Activated CD4-positive, alpha-beta T cell treated with anti-CD3 and anti-CD28 coated beads for 36 hours (primary cell): ENCODE measurements at regions of chr17 and their contacts with region 1.

Region 1: DNA sequence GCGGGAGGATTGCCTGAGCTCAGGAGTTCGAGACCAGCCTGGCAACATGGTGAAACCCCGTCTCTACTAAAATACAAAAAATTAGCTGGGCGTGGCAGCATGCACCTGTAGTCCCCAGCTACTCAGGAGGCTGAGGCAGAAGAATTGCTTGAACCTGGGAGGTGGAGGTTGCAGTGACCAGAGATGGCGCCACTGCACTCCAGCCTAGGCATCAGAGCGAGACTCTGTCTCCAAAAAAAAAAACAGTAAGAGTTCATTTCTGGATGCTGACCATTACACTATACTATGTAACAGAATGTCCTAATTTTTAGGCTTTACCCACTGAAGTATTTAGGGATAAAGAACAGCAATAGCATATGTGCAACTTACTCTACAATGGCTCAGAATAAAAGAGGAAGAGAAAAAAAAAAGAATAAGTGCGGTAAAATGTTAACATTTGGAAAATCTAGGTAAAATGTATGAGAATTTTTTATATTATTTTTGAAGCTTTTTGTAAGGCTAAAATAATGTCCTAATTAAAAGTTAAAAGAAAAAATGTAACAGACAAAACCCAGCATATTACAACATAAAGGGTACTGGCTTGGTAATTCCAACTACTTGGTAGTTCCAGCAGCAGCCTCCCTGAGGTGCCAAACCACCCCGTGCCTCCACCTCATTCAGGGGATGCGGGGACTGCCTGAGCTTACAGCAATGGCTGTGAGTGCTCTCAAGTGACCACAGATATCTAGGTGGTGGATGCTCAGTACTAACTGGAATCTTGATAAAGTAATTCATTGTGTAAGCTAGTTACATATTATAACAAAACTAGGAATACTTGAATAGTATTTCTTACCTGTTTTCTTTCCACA is 10.9 kb downstream of the COPS3 start:
- DNase-seq: peak; percentile 62
- ATAC-seq: no peak
- H3K4me3 Mint-ChIP-seq: no peak overlapping the region
- H3K27ac Mint-ChIP-seq: no peak overlapping the region
- H3K4me1 Mint-ChIP-seq: no peaks in the 10 kb centered on the region
- H3K27me3 Mint-ChIP-seq: no peaks in the 10 kb centered on the region

Region 2: DNA sequence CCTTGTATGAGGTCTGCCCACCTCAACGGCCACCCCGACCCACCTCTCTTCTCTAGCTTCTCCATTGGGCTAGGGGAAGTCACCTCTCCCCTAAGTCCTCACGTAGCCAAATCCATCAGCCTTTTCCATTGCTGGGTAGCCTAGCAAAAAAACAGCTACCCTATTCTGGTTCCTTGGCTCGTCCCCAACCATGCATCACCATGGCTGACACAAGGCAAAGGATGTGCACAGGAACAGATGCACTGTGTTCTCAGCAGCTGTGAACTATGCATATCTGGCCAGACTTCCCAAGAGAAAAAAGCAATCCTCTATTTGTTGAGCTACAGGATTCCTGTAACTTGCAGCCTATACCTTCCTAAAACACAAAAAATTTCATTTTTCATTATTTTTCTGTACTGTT is 11.2 kb before region 1 on chr17:
- CTCF ChIA-PET with region 1: interaction called, 8 read pairs
- POLR2A ChIA-PET with region 1: interaction called, 20 read pairs
- intact Hi-C with region 1: no loop called
- DNase-seq: no peak
- ATAC-seq: no peak
- H3K4me3 Mint-ChIP-seq: no peak overlapping the region
- H3K27ac Mint-ChIP-seq: no peak overlapping the region
- H3K4me1 Mint-ChIP-seq: peaks cover 3% of the 10 kb centered on the region
- H3K27me3 Mint-ChIP-seq: no peaks in the 10 kb centered on the region

Region 3: DNA sequence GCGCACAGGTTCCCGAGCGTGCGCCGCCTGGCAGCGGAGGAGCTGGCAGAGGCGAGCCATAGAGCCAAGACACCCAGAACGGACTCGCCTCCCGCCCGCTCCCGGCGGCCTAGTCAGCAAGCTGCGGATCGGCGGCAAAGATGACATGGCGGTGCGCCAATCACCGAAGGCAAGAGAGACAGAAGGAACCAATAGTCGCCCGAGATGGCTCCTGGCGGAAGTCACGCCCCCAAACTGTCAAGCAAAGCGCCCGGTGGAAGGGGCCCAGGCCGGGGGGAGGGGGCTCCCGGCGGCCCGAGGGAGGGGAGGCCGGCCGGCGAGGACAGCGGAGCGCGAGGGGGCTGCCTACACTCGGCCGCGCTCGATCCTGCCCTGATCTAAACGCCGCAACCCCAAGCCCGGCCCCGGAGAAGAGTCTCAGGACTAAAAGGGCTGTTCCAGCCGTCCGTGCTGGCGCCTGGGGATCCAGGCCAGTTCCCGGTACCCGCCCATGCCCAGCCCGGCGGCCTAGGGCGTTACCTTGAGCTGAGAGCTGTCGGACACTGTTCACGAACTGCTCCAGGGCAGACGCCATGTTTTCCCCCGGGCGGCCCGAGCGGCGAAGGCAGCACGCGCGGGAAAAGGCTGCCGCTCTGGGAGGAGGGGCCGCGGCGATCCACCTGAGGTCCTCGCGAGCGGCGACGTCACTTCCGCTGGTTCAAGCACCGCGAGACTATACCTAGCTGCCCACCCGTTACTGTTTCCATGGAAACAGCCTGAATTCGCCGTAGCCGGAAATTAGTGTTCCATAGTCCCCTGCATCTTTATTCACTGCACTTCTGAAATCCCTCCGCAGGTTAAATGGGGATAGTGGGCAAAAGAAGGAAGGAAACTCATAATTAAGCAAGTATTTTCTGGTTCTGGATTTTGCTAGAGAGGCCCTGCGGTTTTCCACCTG is 10.7 kb after region 1 on chr17 and contains the start of gene COPS3:
- CTCF ChIA-PET with region 1: interaction called, 21 read pairs
- POLR2A ChIA-PET with region 1: interaction called, 3 read pairs
- intact Hi-C with region 1: no loop called
- DNase-seq: peak; percentile 99
- ATAC-seq: peak; percentile 94
- H3K4me3 Mint-ChIP-seq: peak within 1 kb of the TSS; percentile 92
- H3K27ac Mint-ChIP-seq: peak within 1 kb of the TSS; percentile 95
- H3K4me1 Mint-ChIP-seq: peaks cover 41% of the 10 kb centered on the region
- H3K27me3 Mint-ChIP-seq: no peaks in the 10 kb centered on the region
- total RNA-seq, gene COPS3: 79.6 to 83.1 TPM

Region 4: GRCh38 chr17:17297217-17297616 is 27.1 kb after region 1 on chr17:
- CTCF ChIA-PET with region 1: interaction called, 4 read pairs
- POLR2A ChIA-PET with region 1: interaction called, 10 read pairs
- intact Hi-C with region 1: loop called in 1 of 2 experiments (anchors 5 kb)
- DNase-seq: no peak
- ATAC-seq: no peak
- H3K4me3 Mint-ChIP-seq: no peak overlapping the region
- H3K27ac Mint-ChIP-seq: no peak overlapping the region
- H3K4me1 Mint-ChIP-seq: peaks cover 22% of the 10 kb centered on the region
- H3K27me3 Mint-ChIP-seq: peaks cover 2% of the 10 kb centered on the region

Region 5: GRCh38 chr17:17303010-17303846 is 33.1 kb after region 1 on chr17 and contains the start of gene NT5M:
- CTCF ChIA-PET with region 1: interaction called, 4 read pairs
- POLR2A ChIA-PET with region 1: no interaction called
- intact Hi-C with region 1: loop called in 1 of 2 experiments (anchors 5 kb)
- DNase-seq: peak; percentile 84
- ATAC-seq: peak; percentile 58
- H3K4me3 Mint-ChIP-seq: peak within 1 kb of the TSS; percentile 71
- H3K27ac Mint-ChIP-seq: peak within 1 kb of the TSS; percentile 87
- H3K4me1 Mint-ChIP-seq: peaks cover 28% of the 10 kb centered on the region
- H3K27me3 Mint-ChIP-seq: no peaks in the 10 kb centered on the region
- total RNA-seq, gene NT5M: 4.3 to 5.4 TPM

Region 6: GRCh38 chr17:17313350-17313991 is 43.3 kb after region 1 on chr17:
- CTCF ChIA-PET with region 1: interaction called, 4 read pairs
- POLR2A ChIA-PET with region 1: interaction called, 3 read pairs
- intact Hi-C with region 1: loop called (anchors 1 to 5 kb)
- DNase-seq: peak; percentile 85
- ATAC-seq: peak; percentile 100
- H3K4me3 Mint-ChIP-seq: no peak overlapping the region
- H3K27ac Mint-ChIP-seq: no peak overlapping the region
- H3K4me1 Mint-ChIP-seq: peaks cover 6% of the 10 kb centered on the region
- H3K27me3 Mint-ChIP-seq: no peaks in the 10 kb centered on the region